Activated CD4-positive, alpha-beta T cell treated with anti-CD3 and anti-CD28 coated beads, Interleukin-2, amount 10 ng/mL, durations not matched to agents 7 days and 5 days (primary cell): ENCODE measurements at regions of chr5 and their contacts with region 1.

Region 1: GRCh38 chr5:173331956-173332479 is 3.8 kb upstream of the STC2 start:
- DNase-seq: peak; percentile 93
- H3K4me3 Mint-ChIP-seq: no peak overlapping the region
- H3K27ac Mint-ChIP-seq: no peak overlapping the region
- H3K4me1 Mint-ChIP-seq: peaks cover 35% of the 10 kb centered on the region
- H3K27me3 Mint-ChIP-seq: peaks cover 26% of the 10 kb centered on the region

Region 2: DNA sequence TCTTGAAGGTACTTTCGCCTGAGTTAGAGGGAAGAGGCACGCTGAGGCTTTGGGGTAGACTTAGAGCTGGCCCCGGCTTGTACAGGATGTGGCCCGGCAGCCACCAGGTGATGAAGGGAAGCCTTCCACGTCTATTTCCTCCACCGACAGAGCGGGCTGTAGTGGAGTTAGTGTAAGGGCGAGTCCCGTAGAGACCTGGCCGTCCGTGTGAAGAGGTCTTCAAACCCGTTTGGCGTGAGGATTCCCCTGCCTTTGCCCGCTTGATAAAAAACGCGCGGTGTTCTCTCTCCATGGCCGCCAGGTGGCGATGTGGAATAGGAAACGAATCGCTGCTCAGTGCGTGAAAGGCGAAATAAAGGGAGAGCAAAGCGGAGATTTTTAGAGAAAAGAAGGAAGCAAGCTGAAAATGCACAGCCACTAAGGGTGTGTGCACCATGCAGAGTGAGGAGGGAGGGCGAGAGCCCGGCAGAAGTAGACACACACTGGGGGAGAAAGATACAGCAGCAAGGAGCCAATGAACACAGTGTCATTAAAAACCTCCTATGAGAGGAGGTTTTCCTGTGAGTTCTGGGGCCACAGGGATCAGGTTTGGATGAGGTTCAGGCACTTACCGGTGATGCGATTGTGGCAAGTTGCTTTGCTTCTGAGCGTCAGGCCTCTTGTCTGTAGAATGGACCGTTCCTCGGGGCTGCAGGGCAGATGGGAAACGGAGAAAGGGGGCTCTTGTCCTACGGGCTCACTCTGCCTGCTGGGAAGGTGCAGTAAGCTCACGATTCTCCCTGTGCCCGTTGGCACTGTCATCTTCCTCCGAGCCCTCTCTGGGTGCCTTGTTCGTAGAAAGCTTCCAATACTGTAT is 38.0 kb before region 1 on chr5:
- CTCF ChIA-PET with region 1: interaction called, 91 read pairs
- POLR2A ChIA-PET with region 1: no interaction called
- DNase-seq: peak; percentile 77
- H3K4me3 Mint-ChIP-seq: peak overlapping the region; percentile 35
- H3K27ac Mint-ChIP-seq: no peak overlapping the region
- H3K4me1 Mint-ChIP-seq: peaks cover 14% of the 10 kb centered on the region
- H3K27me3 Mint-ChIP-seq: peaks cover 54% of the 10 kb centered on the region

Region 3: GRCh38 chr5:173320259-173320658 is 11.8 kb before region 1 on chr5:
- CTCF ChIA-PET with region 1: interaction called, 45 read pairs
- POLR2A ChIA-PET with region 1: interaction called, 5 read pairs
- DNase-seq: no peak
- H3K4me3 Mint-ChIP-seq: no peak overlapping the region
- H3K27ac Mint-ChIP-seq: no peak overlapping the region
- H3K4me1 Mint-ChIP-seq: peaks cover 16% of the 10 kb centered on the region
- H3K27me3 Mint-ChIP-seq: no peaks in the 10 kb centered on the region